ENCODE measurements at regions of chr4 and their contacts with region 1.

Region 1: GRCh38 chr4:47562297-47562696 is 77.2 kb downstream of the ATP10D start:
- DNase-seq: no peak
- ATAC-seq: no peak

Region 2: GRCh38 chr4:47490550-47490949 is 71.7 kb before region 1 on chr4:
- intact Hi-C with region 1: loop called (anchors 10 kb)
- DNase-seq: no peak
- ATAC-seq: peak; percentile 85

Region 3: GRCh38 chr4:47674144-47674543 is 111.8 kb after region 1 on chr4:
- intact Hi-C with region 1: no loop called
- DNase-seq: no peak
- ATAC-seq: no peak

Measured in left ventricle myocardium superior (tissue), 1 donor.